Mammary epithelial cell (primary cell): ENCODE measurements at regions of chr2 and their contacts with region 1.

Region 1: DNA sequence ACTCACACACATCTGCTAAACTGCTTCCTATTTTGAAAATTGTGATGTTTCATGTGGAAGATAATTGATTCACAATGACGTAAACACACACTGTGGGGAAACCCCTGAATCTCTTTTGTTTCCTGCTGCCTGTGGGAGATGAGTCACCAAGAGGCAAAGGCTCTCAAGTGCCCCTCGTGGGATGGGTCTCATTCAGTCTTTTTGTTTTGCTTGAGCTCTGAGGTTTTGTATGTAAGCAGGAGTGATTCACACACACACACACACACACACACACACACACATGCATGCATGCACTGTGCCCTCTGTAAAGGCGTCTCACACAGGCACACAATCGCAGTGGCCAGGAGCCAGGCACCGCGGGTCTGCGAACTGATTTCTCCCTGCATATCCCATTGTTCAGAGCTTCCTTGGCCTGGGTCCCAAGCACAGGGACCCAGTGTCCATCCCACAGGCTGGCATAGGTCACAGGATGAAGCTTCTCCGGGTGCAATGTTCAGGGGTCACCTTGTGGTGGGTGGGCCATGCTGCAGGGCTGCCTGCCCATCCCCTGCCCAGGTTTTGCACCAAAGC is 12.1 kb upstream of the ARHGEF4 start:
- DNase-seq: peak; percentile 100
- H3K4me3 ChIP-seq: no peak overlapping the region
- H3K27ac ChIP-seq: peak overlapping the region; percentile 79
- H3K4me1 ChIP-seq: peaks cover 71% of the 10 kb centered on the region
- H3K27me3 ChIP-seq: no peaks in the 10 kb centered on the region
- CTCF ChIP-seq: no peak

Region 2: GRCh38 chr2:129575431-129575830 is 1249.1 kb before region 1 on chr2:
- CTCF ChIA-PET with region 1: no interaction called
- dilution Hi-C with region 1: no loop called
- in situ Hi-C with region 1: no loop called
- intact Hi-C with region 1: no loop called
- DNase-seq: no peak
- H3K4me3 ChIP-seq: no peak overlapping the region
- H3K27ac ChIP-seq: no peak overlapping the region
- H3K4me1 ChIP-seq: no peaks in the 10 kb centered on the region
- H3K27me3 ChIP-seq: no peaks in the 10 kb centered on the region
- CTCF ChIP-seq: no peak

Region 3: DNA sequence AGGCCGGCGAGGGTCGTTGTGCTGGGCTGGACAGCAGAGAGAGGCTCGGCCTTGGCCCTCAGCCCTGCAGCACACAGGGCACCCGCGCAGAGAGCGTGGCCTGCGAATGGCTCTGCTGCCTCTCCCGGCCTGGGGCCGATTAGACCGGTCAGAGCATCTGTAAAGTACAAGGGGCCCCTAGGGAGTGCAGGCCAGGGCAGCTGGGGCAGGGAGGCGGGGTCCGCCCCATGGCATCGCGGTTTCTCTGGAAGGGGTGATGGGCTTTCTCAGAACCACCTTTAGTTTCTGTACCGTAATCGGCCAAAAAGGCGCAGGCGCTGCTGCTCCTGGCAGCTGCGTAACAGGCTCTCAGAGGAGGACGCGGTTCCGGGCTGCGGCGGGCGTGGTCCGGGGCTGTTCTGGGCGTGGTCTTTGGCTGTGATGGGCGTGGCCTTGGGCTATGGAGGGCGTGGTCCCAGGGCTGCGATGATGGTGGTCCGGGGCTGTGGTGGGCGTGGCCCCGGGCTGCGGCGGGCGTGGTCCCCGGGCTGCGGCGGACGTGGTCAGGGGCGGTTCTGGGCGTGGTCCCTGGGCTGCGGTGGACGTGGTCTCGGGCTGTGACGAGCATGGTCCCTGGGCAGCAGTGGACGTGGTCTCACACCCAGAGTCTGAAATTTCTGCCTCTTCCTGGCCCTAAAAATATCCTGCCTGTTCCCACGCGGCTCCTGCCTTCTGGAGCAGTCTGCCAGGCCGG is 97.1 kb before region 1 on chr2:
- CTCF ChIA-PET with region 1: no interaction called
- dilution Hi-C with region 1: loop called (anchors 25 kb)
- in situ Hi-C with region 1: no loop called
- intact Hi-C with region 1: no loop called
- DNase-seq: peak; percentile 73
- H3K4me3 ChIP-seq: peak overlapping the region; percentile 61 to 66 (median 63)
- H3K27ac ChIP-seq: peak overlapping the region; percentile 41
- H3K4me1 ChIP-seq: peaks cover 20% of the 10 kb centered on the region
- H3K27me3 ChIP-seq: no peaks in the 10 kb centered on the region
- CTCF ChIP-seq: no peak

Region 4: DNA sequence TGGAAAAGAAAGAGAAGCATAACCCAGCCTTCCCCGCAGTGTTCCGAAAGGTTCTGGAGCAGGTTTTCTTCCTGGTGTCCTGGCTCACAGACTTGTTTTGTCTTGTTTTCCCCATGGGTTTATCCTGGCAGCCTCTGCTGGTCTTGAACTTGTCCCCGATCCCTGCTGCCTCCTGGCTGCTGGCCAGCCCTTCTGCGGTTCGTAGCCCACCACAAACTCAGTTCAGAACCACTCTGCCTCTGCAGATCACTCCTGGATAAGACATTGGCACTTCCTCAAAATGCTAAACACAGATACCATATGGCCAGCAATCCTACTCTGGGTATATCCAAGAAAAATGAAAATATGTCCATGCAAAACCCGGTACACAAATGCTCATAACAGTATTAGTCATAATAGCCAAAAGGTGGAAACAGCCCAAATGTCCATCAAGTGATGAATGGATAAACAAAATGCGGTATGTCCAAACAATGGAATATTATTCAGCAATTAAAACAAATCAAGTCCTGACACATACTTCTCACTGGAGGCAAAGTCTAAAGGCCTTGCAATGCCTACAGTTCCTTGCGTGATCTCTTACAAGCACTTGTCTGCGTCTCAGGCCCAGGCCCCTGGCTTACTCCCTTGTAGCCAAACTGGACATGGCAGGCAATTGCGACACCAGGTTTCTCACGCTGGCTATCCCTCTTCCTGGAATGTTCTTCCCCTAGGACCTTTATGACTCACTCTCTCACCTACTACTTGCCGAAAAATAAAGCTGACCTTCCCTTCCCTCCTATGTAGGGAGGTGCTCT is 15.9 kb before region 1 on chr2:
- CTCF ChIA-PET with region 1: no interaction called
- dilution Hi-C with region 1: no loop called
- in situ Hi-C with region 1: no loop called
- intact Hi-C with region 1: loop called (anchors 1 kb)
- DNase-seq: peak; percentile 98
- H3K4me3 ChIP-seq: peak overlapping the region in 1 of 3 experiments; percentile 31
- H3K27ac ChIP-seq: peak overlapping the region; percentile 88
- H3K4me1 ChIP-seq: peaks cover 31% of the 10 kb centered on the region
- H3K27me3 ChIP-seq: no peaks in the 10 kb centered on the region
- CTCF ChIP-seq: no peak